Naive thymus-derived CD4-positive, alpha-beta T cell (primary cell): ENCODE measurements at regions of chr9 and their contacts with region 1.

Region 1: GRCh38 chr9:110152704-110153374 is 55.1 kb downstream of the C9orf152 start:
- DNase-seq: peak in 4 of 9 donors; percentile 17 to 38 (median 32)
- ATAC-seq: peak; percentile 38
- H3K4me3 ChIP-seq: no peak overlapping the region
- H3K4me3 Mint-ChIP-seq: peak overlapping the region in 2 of 10 donors; percentile 23 to 37
- H3K27ac ChIP-seq: no peak overlapping the region
- H3K27ac Mint-ChIP-seq: peak overlapping the region in 3 of 9 donors; percentile 13 to 95 (median 54)
- H3K4me1 ChIP-seq: peaks cover 22 to 41% of the 10 kb centered on the region in 2 donors
- H3K4me1 Mint-ChIP-seq: peaks cover 52 to 98% (median 63%) of the 10 kb centered on the region in 7 donors
- H3K27me3 ChIP-seq: no peaks in the 10 kb centered on the region
- H3K27me3 Mint-ChIP-seq: no peaks in the 10 kb centered on the region

Region 2: GRCh38 chr9:109440797-109441287 is 712.0 kb before region 1 on chr9:
- CTCF ChIA-PET with region 1: no interaction called
- POLR2A ChIA-PET with region 1: no interaction called
- intact Hi-C with region 1: loop called in 1 of 2 experiments (anchors 10 kb)
- DNase-seq: peak in 8 of 9 donors; percentile 8 to 60 (median 42)
- ATAC-seq: peak; percentile 79
- H3K4me3 ChIP-seq: no peak overlapping the region
- H3K4me3 Mint-ChIP-seq: peak overlapping the region in 6 of 10 donors; percentile 5 to 56 (median 22)
- H3K27ac ChIP-seq: no peak overlapping the region
- H3K27ac Mint-ChIP-seq: peak overlapping the region in 1 of 9 donors; percentile 87
- H3K4me1 ChIP-seq: peaks cover 0 to 4% of the 10 kb centered on the region in 2 donors
- H3K4me1 Mint-ChIP-seq: peaks cover 7 to 21% (median 15%) of the 10 kb centered on the region in 7 donors
- H3K27me3 ChIP-seq: no peaks in the 10 kb centered on the region
- H3K27me3 Mint-ChIP-seq: peaks cover 5 to 30% (median 16%) of the 10 kb centered on the region in 5 donors

Region 3: DNA sequence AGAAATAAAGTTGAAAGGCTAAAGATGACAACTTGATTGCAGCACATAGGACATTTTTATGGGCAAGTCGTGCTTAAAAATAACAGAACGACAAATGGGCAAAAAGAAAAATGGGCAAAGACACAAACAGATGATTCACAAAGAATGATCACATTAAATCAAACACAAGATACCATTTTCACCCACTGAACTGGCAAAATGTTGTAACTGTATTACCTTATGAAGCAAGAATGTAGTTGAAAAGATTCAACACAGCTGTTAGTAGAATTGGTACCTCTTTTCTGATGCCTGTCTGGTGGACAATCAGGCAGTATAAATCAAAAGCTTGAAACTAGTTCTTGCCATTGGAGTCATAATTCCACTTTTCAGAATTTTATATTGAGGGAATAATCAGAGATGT is 453.8 kb before region 1 on chr9:
- CTCF ChIA-PET with region 1: no interaction called
- POLR2A ChIA-PET with region 1: no interaction called
- intact Hi-C with region 1: loop called in 1 of 2 experiments (anchors 5 kb)
- DNase-seq: no peak
- ATAC-seq: no peak
- H3K4me3 ChIP-seq: no peak overlapping the region
- H3K4me3 Mint-ChIP-seq: no peak overlapping the region
- H3K27ac ChIP-seq: no peak overlapping the region
- H3K27ac Mint-ChIP-seq: no peak overlapping the region
- H3K4me1 ChIP-seq: no peaks in the 10 kb centered on the region
- H3K4me1 Mint-ChIP-seq: no peaks in the 10 kb centered on the region
- H3K27me3 ChIP-seq: no peaks in the 10 kb centered on the region
- H3K27me3 Mint-ChIP-seq: peaks cover 0 to 23% (median 15%) of the 10 kb centered on the region in 5 donors

Region 4: GRCh38 chr9:109880277-109881169 is 272.3 kb before region 1 on chr9:
- CTCF ChIA-PET with region 1: interaction called, 3 read pairs
- POLR2A ChIA-PET with region 1: no interaction called
- intact Hi-C with region 1: loop called (anchors 2 kb)
- DNase-seq: peak in 5 of 9 donors; percentile 2 to 33 (median 25)
- ATAC-seq: peak; percentile 72
- H3K4me3 ChIP-seq: no peak overlapping the region
- H3K4me3 Mint-ChIP-seq: peak overlapping the region in 1 of 10 donors; percentile 62
- H3K27ac ChIP-seq: no peak overlapping the region
- H3K27ac Mint-ChIP-seq: peak overlapping the region in 1 of 9 donors; percentile 31
- H3K4me1 ChIP-seq: no peaks in the 10 kb centered on the region
- H3K4me1 Mint-ChIP-seq: peaks cover 0 to 37% (median 0%) of the 10 kb centered on the region in 7 donors
- H3K27me3 ChIP-seq: no peaks in the 10 kb centered on the region
- H3K27me3 Mint-ChIP-seq: peaks cover 4 to 15% (median 8%) of the 10 kb centered on the region in 5 donors

Region 5: GRCh38 chr9:109972026-109972882 is 180.6 kb before region 1 on chr9:
- CTCF ChIA-PET with region 1: no interaction called
- POLR2A ChIA-PET with region 1: no interaction called
- intact Hi-C with region 1: loop called in 1 of 2 experiments (anchors 2 kb)
- DNase-seq: no peak
- ATAC-seq: peak; percentile 53
- H3K4me3 ChIP-seq: no peak overlapping the region
- H3K4me3 Mint-ChIP-seq: peak overlapping the region in 2 of 10 donors; percentile 13 to 29
- H3K27ac ChIP-seq: no peak overlapping the region
- H3K27ac Mint-ChIP-seq: peak overlapping the region in 7 of 9 donors; percentile 16 to 95 (median 69)
- H3K4me1 ChIP-seq: peaks cover 13 to 51% of the 10 kb centered on the region in 2 donors
- H3K4me1 Mint-ChIP-seq: peaks cover 37 to 89% (median 58%) of the 10 kb centered on the region in 7 donors
- H3K27me3 ChIP-seq: no peaks in the 10 kb centered on the region
- H3K27me3 Mint-ChIP-seq: no peaks in the 10 kb centered on the region

Region 6: GRCh38 chr9:110058304-110058953 is 94.4 kb before region 1 on chr9:
- CTCF ChIA-PET with region 1: interaction called, 5 read pairs
- POLR2A ChIA-PET with region 1: no interaction called
- intact Hi-C with region 1: loop called (anchors 1 kb)
- DNase-seq: peak; percentile 16 to 63 (median 47)
- ATAC-seq: peak; percentile 68
- H3K4me3 ChIP-seq: no peak overlapping the region
- H3K4me3 Mint-ChIP-seq: peak overlapping the region in 2 of 10 donors; percentile 9 to 18
- H3K27ac ChIP-seq: no peak overlapping the region
- H3K27ac Mint-ChIP-seq: peak overlapping the region in 1 of 9 donors; percentile 66
- H3K4me1 ChIP-seq: no peaks in the 10 kb centered on the region
- H3K4me1 Mint-ChIP-seq: peaks cover 0 to 54% (median 8%) of the 10 kb centered on the region in 7 donors
- H3K27me3 ChIP-seq: no peaks in the 10 kb centered on the region
- H3K27me3 Mint-ChIP-seq: peaks cover 0 to 4% (median 0%) of the 10 kb centered on the region in 5 donors

Region 7: DNA sequence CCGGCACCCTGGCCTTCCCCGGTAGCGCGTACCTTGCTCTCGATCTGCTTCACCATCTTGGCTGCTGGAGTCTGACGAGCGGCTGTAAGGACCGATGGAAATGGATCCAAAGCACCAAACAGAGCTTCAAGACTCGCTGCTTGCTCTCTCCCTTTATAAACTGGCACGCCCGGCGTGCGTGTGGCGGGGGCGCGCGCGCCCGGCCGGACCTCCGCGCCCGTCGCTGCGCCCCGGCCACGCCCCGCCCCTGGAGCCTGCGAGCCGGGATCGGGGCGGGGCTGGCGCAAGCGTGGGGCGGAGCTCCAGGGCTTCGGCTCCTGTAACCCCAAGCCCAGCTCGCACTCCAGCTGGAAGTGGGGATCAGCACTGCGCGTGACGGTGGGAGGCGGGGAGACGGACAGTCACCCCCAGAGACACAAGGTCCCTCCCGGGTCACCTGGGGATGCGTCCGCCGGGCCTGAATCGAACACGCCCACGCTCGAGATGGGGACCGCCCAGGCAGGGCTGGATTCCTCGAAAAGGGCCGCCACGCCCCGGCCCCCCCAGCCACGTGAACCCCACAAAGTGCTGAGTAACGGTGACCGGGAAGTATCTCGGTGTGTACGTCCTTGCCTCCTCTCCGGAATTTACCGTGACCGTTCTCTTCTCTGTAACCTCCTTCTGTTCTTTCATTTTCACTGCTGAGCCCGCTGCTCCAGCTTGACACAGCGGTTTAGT is 103.7 kb after region 1 on chr9 and contains the start of gene TXN:
- CTCF ChIA-PET with region 1: no interaction called
- POLR2A ChIA-PET with region 1: no interaction called
- intact Hi-C with region 1: loop called in 1 of 2 experiments (anchors 2 kb)
- DNase-seq: peak; percentile 56 to 91 (median 74)
- ATAC-seq: peak; percentile 88
- H3K4me3 ChIP-seq: peak within 1 kb of the TSS; percentile 85
- H3K4me3 Mint-ChIP-seq: peak within 1 kb of the TSS; percentile 83 to 99 (median 96)
- H3K27ac ChIP-seq: peak within 1 kb of the TSS; percentile 65
- H3K27ac Mint-ChIP-seq: peak within 1 kb of the TSS; percentile 87 to 97 (median 89)
- H3K4me1 ChIP-seq: peaks cover 4 to 11% of the 10 kb centered on the region in 2 donors
- H3K4me1 Mint-ChIP-seq: peaks cover 16 to 52% (median 32%) of the 10 kb centered on the region in 7 donors
- H3K27me3 ChIP-seq: no peaks in the 10 kb centered on the region
- H3K27me3 Mint-ChIP-seq: peaks cover 0 to 5% (median 0%) of the 10 kb centered on the region in 5 donors
- total RNA-seq, gene TXN: 22.2 to 276 (median 24.9) TPM